ENCODE measurements at regions of chr11 and their contacts with region 1.

Region 1: GRCh38 chr11:113881856-113882255 is 6.5 kb upstream of the USP28 start:
- DNase-seq: peak; percentile 51 to 74
- H3K4me3 ChIP-seq: no peak overlapping the region
- H3K27ac ChIP-seq: no peak overlapping the region
- H3K4me1 ChIP-seq: peaks cover 23% of the 10 kb centered on the region
- H3K27me3 ChIP-seq: no peaks in the 10 kb centered on the region
- CTCF ChIP-seq: no peak

Region 2: DNA sequence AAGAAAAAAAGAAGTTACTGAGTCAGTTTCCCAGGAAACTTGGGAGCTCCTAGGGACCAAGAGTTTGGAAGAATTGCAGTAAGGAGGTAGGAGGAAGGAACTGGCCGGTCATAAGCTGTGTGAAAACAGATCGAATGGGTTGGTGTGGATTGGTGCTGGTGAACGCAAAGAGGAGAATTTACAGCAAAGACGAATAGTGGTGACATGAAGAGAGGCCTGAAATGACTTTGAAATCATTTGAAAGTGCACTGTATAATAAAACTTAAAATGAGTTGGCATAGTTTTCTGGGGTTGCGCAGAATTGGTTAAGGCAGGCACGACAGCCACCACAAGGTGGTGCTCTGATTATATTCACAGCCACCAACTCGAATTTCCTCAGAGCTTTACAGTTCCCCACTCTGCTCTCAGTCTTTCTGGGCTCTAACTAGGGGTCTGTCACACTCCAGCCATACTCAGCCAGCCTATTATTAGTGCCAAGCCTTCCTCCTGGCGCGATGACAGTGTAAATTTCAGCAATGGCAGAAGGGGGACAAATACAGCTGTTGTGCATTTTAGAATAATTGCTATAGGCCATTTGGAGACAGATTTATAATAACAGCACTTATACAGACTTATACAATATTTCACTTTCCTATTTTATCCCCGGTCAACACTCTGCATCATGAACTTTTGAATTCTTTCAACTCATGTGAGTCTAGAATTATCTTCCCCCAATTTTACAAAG is 14.5 kb after region 1 on chr11:
- CTCF ChIA-PET with region 1: interaction called, 15 read pairs
- POLR2A ChIA-PET with region 1: no interaction called
- intact Hi-C with region 1: no loop called
- DNase-seq: no peak
- H3K4me3 ChIP-seq: no peak overlapping the region
- H3K27ac ChIP-seq: no peak overlapping the region
- H3K4me1 ChIP-seq: no peaks in the 10 kb centered on the region
- H3K27me3 ChIP-seq: peaks cover 46% of the 10 kb centered on the region
- CTCF ChIP-seq: peak; percentile 76

Measured in PC-9 (cell line).